ENCODE measurements at regions of chr4 and their contacts with region 1.

Region 1: GRCh38 chr4:184282251-184282713 is 64.6 kb upstream of the ENPP6 start:
- DNase-seq: peak; percentile 87
- H3K4me3 ChIP-seq: peak overlapping the region; percentile 50
- H3K27ac ChIP-seq: peak overlapping the region; percentile 96
- H3K4me1 ChIP-seq: peaks cover 80% of the 10 kb centered on the region
- CTCF ChIP-seq: peak; percentile 66

Region 2: GRCh38 chr4:183504064-183504929 is 778.0 kb before region 1 on chr4:
- CTCF ChIA-PET with region 1: no interaction called
- POLR2A ChIA-PET with region 1: interaction called, 4 read pairs
- intact Hi-C with region 1: loop called (anchors 2 kb)
- DNase-seq: peak; percentile 98
- H3K4me3 ChIP-seq: peak overlapping the region; percentile 100
- H3K27ac ChIP-seq: peak overlapping the region; percentile 89
- H3K4me1 ChIP-seq: peaks cover 23% of the 10 kb centered on the region
- CTCF ChIP-seq: no peak

Region 3: GRCh38 chr4:184007891-184008290 is 274.4 kb before region 1 on chr4:
- CTCF ChIA-PET with region 1: no interaction called
- POLR2A ChIA-PET with region 1: no interaction called
- intact Hi-C with region 1: no loop called
- DNase-seq: no peak
- H3K4me3 ChIP-seq: no peak overlapping the region
- H3K27ac ChIP-seq: no peak overlapping the region
- H3K4me1 ChIP-seq: no peaks in the 10 kb centered on the region
- CTCF ChIP-seq: no peak

Region 4: DNA sequence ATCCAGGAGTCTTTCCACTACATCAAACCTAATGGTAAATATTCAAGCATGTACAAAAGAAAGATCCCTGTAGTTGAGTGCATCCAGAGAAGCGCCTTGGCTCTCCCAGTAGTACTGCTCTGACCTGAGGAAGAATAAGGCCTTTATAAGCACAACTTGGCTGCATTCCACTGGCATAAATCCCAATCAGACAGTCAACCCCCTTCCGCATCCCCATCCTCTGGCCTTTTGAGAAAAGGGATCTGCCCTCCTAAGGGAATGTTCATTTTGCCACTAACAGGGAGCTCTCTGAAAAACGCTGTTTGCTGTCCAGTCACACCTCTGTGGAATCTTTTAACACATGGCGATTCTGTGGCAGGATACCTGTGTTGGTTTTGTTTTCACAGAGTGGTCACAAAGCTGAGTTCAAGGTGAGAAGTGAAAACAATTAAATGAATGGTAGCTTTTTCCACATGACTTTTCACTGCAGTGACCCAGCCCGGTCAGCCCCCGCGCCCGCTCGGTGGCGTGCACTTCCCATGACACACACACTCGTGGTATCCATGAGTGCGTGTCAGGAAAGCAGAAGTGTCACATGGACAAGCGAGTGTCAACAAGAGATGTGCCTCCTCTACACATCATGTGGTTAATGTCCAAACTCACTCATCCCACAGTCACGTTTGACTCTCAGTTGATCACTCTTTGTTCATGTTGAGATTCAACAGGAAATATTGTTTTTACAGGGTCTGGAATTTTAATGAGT is 47.5 kb after region 1 on chr4:
- CTCF ChIA-PET with region 1: interaction called, 7 read pairs
- POLR2A ChIA-PET with region 1: interaction called, 44 read pairs
- intact Hi-C with region 1: loop called (anchors 1 kb)
- DNase-seq: no peak
- H3K4me3 ChIP-seq: no peak overlapping the region
- H3K27ac ChIP-seq: peak overlapping the region; percentile 82
- H3K4me1 ChIP-seq: peaks cover 77% of the 10 kb centered on the region
- CTCF ChIP-seq: no peak

Region 5: DNA sequence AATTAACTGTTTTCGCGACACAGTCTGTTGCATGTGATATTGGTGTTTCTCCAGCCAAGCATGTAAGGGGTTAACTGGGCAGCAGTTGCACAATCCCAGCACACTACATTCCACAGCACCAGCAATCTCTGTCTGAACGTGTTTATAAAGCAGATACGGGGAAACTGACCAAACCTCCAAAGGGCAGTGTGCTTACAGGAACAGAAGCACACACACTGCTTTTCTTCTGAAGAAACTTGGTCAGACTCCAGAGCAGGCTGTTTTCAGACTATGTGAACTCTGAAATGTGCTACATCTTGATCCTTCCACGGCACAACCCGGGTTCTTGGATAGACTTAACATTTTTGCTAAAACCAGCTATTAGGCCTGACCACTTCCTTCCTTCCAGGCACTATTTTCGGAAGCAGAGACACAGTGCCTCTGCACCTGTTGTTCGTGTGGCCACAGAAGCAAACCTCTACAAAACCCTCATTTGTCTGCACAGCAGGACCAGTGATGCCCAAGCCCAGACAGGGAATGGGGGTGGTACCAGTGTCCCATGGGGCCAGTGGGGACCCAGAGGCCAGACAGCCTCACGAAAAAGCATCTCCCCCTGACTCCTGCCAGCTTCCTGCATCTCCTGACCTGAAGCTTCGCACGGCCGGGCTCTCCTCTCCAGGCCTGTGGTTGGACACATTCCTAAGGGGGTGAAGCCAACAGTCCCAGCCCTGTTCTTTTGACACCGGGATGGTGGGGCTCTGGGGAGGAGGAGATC is 102.0 kb after region 1 on chr4:
- CTCF ChIA-PET with region 1: no interaction called
- POLR2A ChIA-PET with region 1: interaction called, 6 read pairs
- intact Hi-C with region 1: loop called (anchors 2 kb)
- DNase-seq: peak; percentile 92
- H3K4me3 ChIP-seq: peak overlapping the region; percentile 45
- H3K27ac ChIP-seq: peak overlapping the region; percentile 29
- H3K4me1 ChIP-seq: peaks cover 70% of the 10 kb centered on the region
- CTCF ChIP-seq: no peak

Region 6: DNA sequence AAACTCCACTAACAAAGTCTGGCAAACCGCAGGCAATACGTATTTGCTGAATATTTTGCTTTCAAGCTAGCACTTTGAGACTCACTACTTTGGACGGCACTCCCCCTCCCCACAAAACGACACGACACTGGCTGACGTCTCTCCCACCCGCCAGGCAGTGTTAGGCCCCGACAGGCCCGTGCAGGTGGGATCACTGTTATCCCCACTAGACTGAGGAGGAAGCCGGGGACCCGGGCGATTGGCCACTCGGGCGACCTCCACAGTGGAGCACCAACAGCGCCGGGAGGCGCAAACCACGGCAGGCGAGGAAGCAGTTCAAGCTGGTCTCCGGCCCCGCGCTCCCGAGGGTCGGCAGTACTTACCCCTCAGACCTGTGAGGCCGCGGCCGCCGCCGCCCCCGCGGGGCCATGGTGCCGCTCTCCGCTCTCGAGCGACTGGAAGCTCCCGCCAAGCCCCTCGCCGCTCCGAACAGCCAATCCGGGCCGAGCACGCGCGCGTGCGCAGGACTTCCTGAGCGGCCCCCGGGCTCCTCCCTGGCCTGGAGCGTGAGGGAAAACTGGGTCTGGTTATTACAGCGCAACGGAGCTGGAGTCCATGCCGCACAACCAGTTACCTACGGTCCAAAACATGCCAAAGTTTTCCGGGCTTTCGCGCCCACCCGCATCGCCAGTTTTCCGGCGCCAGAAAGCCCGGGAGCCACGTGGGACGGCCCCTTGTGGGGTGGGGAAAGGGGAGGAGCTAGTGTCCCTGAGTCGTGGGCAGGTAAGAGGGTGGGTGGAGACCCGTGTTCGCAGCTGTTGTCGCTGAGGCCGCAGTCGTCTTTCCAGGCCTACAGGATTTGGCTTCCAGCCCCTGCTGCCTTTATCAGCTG is 451.6 kb after region 1 on chr4 and contains the start of gene CENPU:
- CTCF ChIA-PET with region 1: no interaction called
- POLR2A ChIA-PET with region 1: interaction called, 3 read pairs
- intact Hi-C with region 1: loop called (anchors 1 kb)
- DNase-seq: peak; percentile 99
- H3K4me3 ChIP-seq: peak within 1 kb of the TSS; percentile 94
- H3K27ac ChIP-seq: peak within 1 kb of the TSS; percentile 84
- H3K4me1 ChIP-seq: peaks cover 30% of the 10 kb centered on the region
- CTCF ChIP-seq: no peak
- total RNA-seq, gene CENPU: 83.9 and 85.1 TPM in 2 replicates

Region 7: GRCh38 chr4:185203486-185204237 is 921.4 kb after region 1 on chr4 and contains the start of gene CFAP97:
- CTCF ChIA-PET with region 1: no interaction called
- POLR2A ChIA-PET with region 1: no interaction called
- intact Hi-C with region 1: loop called (anchors 10 kb)
- DNase-seq: peak; percentile 76
- H3K4me3 ChIP-seq: peak within 1 kb of the TSS; percentile 78
- H3K27ac ChIP-seq: peak within 1 kb of the TSS; percentile 76
- H3K4me1 ChIP-seq: peaks cover 41% of the 10 kb centered on the region
- CTCF ChIP-seq: no peak
- total RNA-seq, gene CFAP97: 20.4 and 22.7 TPM in 2 replicates